Activated CD4-positive, alpha-beta T cell treated with anti-CD3 and anti-CD28 coated beads for 36 hours (primary cell): ENCODE measurements at regions of chr5 and their contacts with region 1.

Region 1: DNA sequence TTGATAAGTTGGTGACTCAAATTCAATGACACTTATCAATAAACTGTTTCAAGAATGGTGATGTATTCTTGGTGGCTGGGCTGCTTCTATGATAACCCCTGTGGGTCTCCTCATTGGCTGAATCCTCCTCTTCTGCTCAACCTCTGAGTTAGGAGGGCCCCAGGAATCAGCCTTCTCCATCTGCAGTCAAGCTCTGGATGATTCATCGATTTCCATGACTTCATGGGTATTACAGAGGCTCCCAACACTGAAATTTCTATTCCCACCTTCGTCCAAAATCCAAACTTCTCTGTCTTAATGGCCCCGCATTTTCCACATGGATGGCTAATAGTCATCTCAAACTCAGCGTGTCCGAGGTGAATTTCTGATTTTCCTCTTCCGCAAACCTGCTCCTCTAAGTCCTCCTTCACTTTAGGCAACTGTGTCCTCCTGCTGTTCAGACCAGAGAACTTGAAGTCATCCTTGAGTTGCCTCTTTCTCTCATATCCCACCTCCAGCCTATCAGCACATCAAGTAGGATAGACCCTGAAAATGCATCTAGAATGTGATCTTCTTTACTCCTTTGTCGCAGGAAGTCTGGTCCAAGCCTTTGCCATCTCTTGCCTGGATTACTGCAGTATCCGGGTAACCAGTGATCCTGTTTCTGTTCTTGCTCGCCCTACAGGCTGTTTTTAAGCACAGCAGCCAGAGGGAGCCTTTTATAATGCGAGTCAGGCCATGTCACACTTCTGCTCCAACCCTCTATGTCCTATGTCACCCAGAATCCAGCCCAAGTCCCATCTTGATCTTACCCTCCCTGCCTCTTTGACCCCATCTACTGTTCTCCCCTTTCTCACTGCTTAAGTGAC is 41.4 kb upstream of the IL7R start:
- DNase-seq: peak; percentile 72
- ATAC-seq: peak; percentile 41
- H3K4me3 Mint-ChIP-seq: no peak overlapping the region
- H3K27ac Mint-ChIP-seq: no peak overlapping the region
- H3K4me1 Mint-ChIP-seq: peaks cover 56% of the 10 kb centered on the region
- H3K27me3 Mint-ChIP-seq: no peaks in the 10 kb centered on the region

Region 2: DNA sequence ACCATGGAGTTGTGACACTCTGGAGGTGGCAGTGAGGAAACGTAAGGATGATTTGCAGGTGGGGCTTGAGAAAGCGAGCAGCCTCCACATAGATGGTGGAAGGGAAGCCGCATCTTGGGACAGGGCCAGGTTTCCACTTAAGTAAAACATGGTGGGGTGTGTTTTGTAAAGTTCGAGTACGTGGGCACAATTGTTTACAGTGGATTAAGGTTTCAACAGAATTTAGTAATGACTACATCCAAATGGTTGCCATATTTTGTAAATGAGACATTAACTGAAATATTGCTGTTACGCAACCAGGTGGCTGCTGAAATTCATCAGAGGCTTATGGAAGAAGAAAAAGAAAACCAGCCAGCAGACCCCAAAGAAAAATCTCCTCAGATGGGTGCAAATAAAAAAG is 44.0 kb before region 1 on chr5:
- CTCF ChIA-PET with region 1: interaction called, 35 read pairs
- POLR2A ChIA-PET with region 1: no interaction called
- intact Hi-C with region 1: loop called (anchors 1 to 2 kb)
- DNase-seq: no peak
- ATAC-seq: no peak
- H3K4me3 Mint-ChIP-seq: no peak overlapping the region
- H3K27ac Mint-ChIP-seq: no peak overlapping the region
- H3K4me1 Mint-ChIP-seq: peaks cover 53% of the 10 kb centered on the region
- H3K27me3 Mint-ChIP-seq: no peaks in the 10 kb centered on the region

Region 3: DNA sequence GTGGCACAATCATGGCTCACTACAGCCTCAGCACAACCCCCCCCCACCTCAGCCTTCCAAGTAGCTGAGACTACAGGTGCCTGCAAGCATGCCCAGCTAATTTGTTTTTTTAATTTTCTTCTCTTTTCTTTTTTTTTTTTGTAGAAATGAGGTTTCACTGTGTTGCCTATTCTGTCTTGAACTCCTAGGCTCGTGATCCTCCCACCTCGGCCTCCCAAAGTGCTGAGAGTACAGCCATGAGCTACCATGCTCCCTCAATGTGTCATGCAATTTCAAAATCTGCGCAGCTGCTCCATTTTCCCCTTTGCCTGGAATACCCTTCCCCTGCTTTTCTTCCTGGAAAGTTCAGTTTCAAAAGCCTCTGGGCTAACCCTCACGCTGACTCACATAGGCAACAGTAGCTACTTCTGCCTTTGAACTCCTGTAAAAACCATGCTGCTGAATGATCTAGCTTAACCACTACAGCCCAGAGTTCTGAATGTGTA is 29.7 kb before region 1 on chr5:
- CTCF ChIA-PET with region 1: interaction called, 16 read pairs
- POLR2A ChIA-PET with region 1: interaction called, 7 read pairs
- intact Hi-C with region 1: loop called (anchors 2 kb)
- DNase-seq: peak; percentile 73
- ATAC-seq: peak; percentile 84
- H3K4me3 Mint-ChIP-seq: peak overlapping the region; percentile 43
- H3K27ac Mint-ChIP-seq: peak overlapping the region; percentile 96
- H3K4me1 Mint-ChIP-seq: peaks cover 89% of the 10 kb centered on the region
- H3K27me3 Mint-ChIP-seq: no peaks in the 10 kb centered on the region

Region 4: GRCh38 chr5:35830587-35830986 is 15.3 kb after region 1 on chr5:
- CTCF ChIA-PET with region 1: interaction called, 9 read pairs
- POLR2A ChIA-PET with region 1: interaction called, 4 read pairs
- intact Hi-C with region 1: loop called (anchors 1 kb)
- DNase-seq: no peak
- ATAC-seq: peak; percentile 8
- H3K4me3 Mint-ChIP-seq: peak overlapping the region; percentile 30
- H3K27ac Mint-ChIP-seq: peak overlapping the region; percentile 91
- H3K4me1 Mint-ChIP-seq: peaks cover 93% of the 10 kb centered on the region
- H3K27me3 Mint-ChIP-seq: no peaks in the 10 kb centered on the region

Region 5: DNA sequence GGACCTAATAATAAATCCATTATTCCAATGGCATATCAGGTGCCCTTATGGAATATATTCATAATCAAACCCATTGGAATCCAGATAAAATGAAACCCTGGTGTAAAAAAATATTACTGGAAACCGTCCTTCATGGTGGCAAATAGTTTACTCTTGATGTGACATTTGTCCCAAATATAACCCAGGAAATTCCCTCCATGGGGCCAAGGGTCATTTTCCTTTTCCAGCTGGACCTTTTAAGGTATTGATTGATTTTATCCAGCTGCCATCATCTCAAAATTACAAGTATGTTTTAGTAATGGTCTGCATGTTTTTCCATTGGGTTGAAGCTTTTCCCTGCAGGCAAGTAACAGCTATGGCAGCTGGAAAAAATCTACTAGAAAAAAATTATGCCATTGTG is 184.2 kb after region 1 on chr5:
- CTCF ChIA-PET with region 1: no interaction called
- POLR2A ChIA-PET with region 1: no interaction called
- intact Hi-C with region 1: no loop called
- DNase-seq: no peak
- ATAC-seq: no peak
- H3K4me3 Mint-ChIP-seq: no peak overlapping the region
- H3K27ac Mint-ChIP-seq: no peak overlapping the region
- H3K4me1 Mint-ChIP-seq: no peaks in the 10 kb centered on the region
- H3K27me3 Mint-ChIP-seq: peaks cover 7% of the 10 kb centered on the region